Heart left ventricle (tissue), 16 donors: ENCODE measurements at regions of chr3 and their contacts with region 1.

Region 1: DNA sequence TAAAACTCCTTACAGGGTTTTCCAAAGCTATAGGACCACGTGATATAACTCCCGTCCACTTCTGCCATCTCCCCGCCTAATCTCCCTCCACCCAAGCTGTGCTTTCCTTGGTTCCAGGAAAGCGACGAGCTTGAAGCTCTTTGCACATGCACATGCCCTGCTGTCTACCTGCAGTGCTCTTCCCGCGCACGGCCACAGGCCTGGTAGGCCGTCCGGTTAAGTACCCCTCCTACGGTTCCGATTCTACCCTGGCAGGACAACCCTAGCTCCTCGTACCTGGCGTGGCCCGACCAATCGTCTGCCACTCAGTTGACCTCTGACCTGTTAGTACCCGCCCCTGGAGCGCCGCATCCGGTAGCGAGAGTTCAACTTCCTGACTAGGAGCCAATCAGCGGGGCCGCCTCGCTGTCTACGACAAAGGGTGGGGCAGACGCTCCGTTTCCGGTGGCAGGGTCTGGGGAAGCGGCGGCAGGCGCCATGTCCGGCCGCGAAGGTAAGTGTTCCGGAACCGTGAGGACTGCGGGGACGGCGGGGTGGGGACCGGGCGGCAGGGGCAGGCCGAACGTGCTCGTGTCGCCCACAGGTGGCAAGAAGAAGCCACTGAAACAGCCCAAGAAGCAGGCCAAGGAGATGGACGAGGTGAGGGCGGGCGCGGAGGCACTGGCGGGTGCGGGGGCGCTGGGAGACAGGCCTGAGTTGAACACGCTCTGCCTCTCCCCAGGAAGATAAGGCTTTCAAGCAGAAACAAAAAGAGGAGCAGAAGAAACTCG is at the starts of genes CCDC51 and TMA7:
- DNase-seq: peak; percentile 98 to 99 (median 99)
- ATAC-seq: peak; percentile 97 to 99 (median 99)
- H3K4me3 ChIP-seq: peak within 1 kb of the TSS; percentile 60 to 98 (median 86)
- H3K27ac ChIP-seq: peak within 1 kb of the TSS; percentile 78 to 96 (median 92)
- H3K4me1 ChIP-seq: peaks cover 0 to 32% (median 19%) of the 10 kb centered on the region in 12 donors
- H3K27me3 ChIP-seq: no peaks in the 10 kb centered on the region
- CTCF ChIP-seq: no peak
- POLR2A ChIP-seq: peak in 1 of 2 donors; percentile 85
- total RNA-seq, gene CCDC51: 8.2 to 14.8 (median 11.6) TPM
- total RNA-seq, gene TMA7: 177 to 284 (median 198) TPM

Region 2: DNA sequence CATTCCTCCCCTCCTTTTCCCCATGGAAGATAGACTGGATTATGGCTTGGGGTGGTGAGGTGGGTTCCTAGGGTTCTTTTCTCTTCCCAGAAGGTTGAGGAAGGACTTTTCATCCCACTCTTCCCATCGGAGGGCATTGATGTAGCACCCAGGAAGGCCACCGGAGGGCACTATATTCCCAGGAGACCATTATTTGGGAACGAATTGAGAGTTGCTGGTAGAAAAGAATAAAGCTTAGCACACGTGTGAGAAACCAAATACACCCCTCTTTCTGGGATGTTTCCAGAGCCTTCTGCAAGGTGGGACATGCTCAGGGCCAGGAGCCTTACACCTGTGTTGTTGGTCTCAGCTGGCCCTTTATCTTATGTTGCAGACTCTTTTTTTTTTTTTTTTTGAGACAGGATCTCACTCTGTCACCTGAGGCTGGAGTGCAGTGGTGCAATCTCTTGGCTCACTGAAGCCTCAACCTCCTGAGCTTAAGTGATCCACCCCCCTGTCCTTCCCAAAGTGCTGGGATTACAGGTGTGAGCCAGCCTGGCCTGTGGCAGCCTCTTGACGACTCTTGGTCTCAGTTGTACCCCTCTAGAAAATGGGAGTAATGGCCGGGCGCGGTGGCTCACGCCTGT is 245.4 kb before region 1 on chr3:
- intact Hi-C with region 1: loop called in 2 of 10 experiments (anchors 2 to 5 kb)
- DNase-seq: peak in 3 of 5 donors; percentile 27 to 50 (median 45)
- ATAC-seq: peak in 3 of 4 donors; percentile 54 to 63 (median 58)
- H3K4me3 ChIP-seq: no peak overlapping the region
- H3K27ac ChIP-seq: no peak overlapping the region
- H3K4me1 ChIP-seq: peaks cover 0 to 3% (median 0%) of the 10 kb centered on the region in 12 donors
- H3K27me3 ChIP-seq: no peaks in the 10 kb centered on the region
- CTCF ChIP-seq: peak; percentile 53 to 70 (median 62)
- POLR2A ChIP-seq: no peak

Region 3: DNA sequence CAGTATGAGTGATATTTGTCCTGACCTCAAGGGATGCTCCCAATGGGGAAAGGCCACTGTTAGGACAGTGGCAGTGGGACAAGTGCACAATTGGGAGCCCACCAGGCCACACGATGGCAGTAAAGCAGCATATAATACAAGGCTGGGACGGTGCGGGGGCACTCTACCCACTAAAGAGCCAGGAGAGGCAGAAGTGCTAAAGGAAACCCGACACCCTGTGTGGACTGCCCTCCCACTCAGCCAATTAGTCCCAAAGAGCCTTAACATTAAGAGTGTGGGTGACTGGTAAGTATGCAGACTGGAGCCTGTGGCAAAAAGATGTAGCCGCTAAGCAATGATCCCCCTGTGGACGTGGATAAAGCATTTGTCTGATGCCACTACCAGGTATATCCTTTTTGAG is 207.3 kb before region 1 on chr3:
- intact Hi-C with region 1: loop called in 3 of 10 experiments (anchors 2 to 5 kb)
- DNase-seq: peak; percentile 49 to 78 (median 62)
- ATAC-seq: peak; percentile 74 to 96 (median 95)
- H3K4me3 ChIP-seq: peak overlapping the region in 4 of 12 donors; percentile 6 to 31 (median 23)
- H3K27ac ChIP-seq: peak overlapping the region in 2 of 12 donors; percentile 18 to 27
- H3K4me1 ChIP-seq: peaks cover 0 to 15% (median 9%) of the 10 kb centered on the region in 12 donors
- H3K27me3 ChIP-seq: no peaks in the 10 kb centered on the region
- CTCF ChIP-seq: peak; percentile 35 to 70 (median 52)
- POLR2A ChIP-seq: no peak

Region 4: DNA sequence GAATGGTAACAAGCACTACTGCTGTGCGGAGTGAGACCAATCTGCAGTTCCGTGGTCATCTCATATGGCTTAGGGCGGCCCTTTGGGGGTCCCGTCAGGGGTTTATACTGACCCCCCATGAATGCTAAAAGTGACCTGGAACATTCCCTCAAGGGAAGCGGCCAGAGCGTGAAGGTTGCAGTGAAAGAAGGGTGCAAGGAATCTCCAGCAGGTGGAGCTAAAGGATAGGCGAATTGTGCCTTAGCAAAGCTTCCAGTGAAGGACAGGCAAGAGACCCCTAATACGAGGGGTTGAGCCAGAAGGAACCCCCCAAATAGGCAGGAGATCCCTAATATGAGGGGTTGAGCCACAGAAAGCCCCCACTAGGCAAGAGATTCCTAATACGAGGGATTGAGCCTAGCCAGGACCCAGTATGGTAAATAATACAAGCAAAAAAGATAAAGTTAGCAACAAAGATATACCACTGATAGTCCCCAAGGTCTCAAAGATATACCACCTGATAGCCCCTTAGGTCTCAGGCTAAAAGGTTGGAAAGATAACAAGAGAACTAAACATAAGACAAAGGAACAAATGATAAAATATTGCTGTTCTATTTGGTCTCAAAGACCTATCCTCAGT is 166.3 kb before region 1 on chr3:
- intact Hi-C with region 1: loop called (anchors 1 to 5 kb)
- DNase-seq: peak in 3 of 5 donors; percentile 30 to 47 (median 46)
- ATAC-seq: peak in 3 of 4 donors; percentile 65 to 69 (median 69)
- H3K4me3 ChIP-seq: no peak overlapping the region
- H3K27ac ChIP-seq: no peak overlapping the region
- H3K4me1 ChIP-seq: peaks cover 0 to 4% (median 0%) of the 10 kb centered on the region in 12 donors
- H3K27me3 ChIP-seq: no peaks in the 10 kb centered on the region
- CTCF ChIP-seq: peak; percentile 60 to 84 (median 74)
- POLR2A ChIP-seq: no peak

Region 5: DNA sequence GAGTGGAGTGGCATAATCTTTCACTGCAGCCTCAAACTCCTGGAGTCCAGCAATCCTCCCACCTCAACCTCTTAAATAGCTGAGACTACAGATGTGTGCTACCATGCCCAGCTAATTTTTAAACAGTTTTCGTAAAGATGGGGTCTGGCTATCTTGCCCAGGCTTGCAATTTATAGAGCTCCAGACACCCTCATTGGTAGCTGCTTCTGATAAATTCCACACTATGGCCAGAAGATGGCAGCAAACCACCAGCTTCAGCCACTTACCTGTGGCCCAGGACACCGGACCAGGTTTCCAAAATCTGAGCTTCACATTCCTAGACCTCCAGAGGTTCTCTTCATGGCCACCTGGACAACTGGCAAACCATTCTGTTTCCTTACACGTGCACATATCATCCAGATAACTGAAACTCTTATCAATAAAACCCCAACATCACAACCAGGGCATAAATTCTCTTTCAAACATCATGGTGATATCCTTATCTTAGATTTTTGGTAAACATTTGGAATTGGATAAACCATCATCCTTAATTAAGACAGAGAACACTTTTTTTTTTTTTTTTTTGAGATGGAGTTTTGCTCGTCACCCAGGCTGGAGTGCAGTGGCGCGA is 39.1 kb before region 1 on chr3:
- intact Hi-C with region 1: loop called in 9 of 10 experiments (anchors 1 to 2 kb)
- DNase-seq: peak; percentile 46 to 57 (median 49)
- ATAC-seq: peak; percentile 43 to 77 (median 60)
- H3K4me3 ChIP-seq: no peak overlapping the region
- H3K27ac ChIP-seq: peak overlapping the region in 1 of 12 donors; percentile 86
- H3K4me1 ChIP-seq: peaks cover 0 to 11% (median 2%) of the 10 kb centered on the region in 12 donors
- H3K27me3 ChIP-seq: no peaks in the 10 kb centered on the region
- CTCF ChIP-seq: peak; percentile 72 to 89 (median 79)
- POLR2A ChIP-seq: no peak